Activated T-helper 1 cell treated with anti-CD3 and anti-CD28 coated beads, Interleukin-12 subunit alpha, Interleukin-12 subunit beta, Interleukin-2, Interleukin-4 antibody, amounts not matched to agents 30 ng/mL and 10 ng/mL and 1 ng/mL, durations not matched to agents 14 hours and 24 hours and 36 hours (primary cell): ENCODE measurements at regions of chr10 and their contacts with region 1.

Region 1: DNA sequence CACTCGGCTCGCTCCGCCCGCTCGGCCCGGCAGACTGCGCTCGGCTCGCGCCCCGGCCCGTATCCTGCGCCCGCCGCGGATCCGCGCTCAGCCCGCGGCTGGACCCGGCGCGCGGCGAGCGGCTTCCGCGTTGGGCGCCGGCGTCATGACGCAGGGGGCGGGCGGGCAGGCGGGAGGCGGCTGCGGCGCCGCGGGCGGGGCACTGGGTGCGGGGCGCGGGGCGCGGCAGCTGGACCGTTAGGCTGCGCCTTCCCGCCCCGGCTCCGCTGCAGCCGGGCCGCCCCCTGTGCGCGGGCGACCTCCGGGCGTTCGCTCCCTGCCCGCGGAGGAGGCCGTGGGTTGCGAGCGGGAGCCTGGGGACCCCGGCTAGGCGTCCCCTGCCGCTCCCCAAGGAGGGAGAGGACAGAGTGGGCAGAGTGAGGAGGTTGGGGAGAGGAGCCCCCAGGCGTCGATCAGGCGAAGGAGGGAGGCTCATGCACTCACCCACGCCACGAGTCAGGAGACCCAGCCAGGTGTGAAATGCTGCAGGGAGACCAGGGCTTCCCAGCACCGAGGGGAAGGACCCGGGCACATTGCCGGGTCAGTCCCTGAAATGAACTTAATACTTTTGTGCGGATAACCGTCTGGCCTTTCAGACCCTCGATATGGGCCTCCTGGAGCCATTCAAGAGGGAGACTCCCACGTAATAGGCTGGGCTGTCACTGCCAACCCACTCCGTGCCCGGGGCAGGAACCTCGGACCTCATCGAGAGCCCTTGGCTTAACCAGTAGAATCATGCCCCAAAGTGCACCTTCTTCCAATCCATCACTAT is at the start of gene PIP4K2A:
- DNase-seq: peak; percentile 72
- H3K4me3 Mint-ChIP-seq: peak within 1 kb of the TSS; percentile 88
- H3K27ac Mint-ChIP-seq: peak within 1 kb of the TSS; percentile 85
- H3K4me1 Mint-ChIP-seq: peaks cover 39% of the 10 kb centered on the region
- H3K27me3 Mint-ChIP-seq: no peaks in the 10 kb centered on the region
- total RNA-seq, gene PIP4K2A: 92.7 and 104 TPM in 2 replicates

Region 2: DNA sequence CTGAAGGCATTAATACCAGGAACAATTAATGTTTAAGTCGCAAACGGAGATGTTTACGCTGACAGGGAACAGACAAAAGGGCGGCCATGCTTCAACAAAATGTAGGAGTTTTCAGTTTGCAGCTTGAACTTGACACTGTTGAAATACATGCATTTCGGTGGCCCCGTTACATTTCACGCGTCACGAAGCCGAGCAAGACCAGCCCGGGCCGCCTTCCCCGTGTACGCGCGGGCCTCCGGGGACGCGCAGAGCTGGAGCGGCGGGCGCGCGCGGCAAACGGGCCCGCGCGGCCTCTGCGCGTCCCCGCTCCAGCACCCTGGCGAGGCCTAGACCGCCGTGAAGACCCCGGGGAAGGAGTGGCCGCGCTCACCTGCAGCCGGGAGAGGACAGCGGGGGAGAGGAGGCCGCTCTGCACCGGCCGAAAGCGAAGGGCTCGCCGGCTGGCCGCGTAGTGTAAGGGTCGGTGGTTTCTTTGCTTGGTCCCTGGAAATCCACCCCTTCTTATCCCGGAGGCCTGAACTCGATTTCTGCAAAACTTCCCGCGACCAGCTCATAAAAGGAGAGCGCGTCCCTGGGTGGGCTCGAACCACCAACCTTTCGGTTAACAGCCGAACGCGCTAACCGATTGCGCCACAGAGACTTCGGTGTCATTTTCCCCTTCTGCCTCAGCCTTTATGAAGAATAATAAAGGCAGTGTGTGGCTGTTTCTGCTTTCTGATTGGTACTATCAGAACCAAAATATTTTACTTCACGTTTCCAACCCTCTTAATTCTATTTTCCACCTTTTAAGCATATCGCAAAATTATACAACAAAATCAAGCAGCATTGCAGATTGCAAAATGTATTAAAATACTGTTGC is 485.5 kb before region 1 on chr10:
- intact Hi-C with region 1: loop called (anchors 10 kb)
- DNase-seq: peak; percentile 77
- H3K4me3 Mint-ChIP-seq: peak overlapping the region; percentile 92
- H3K27ac Mint-ChIP-seq: peak overlapping the region; percentile 98
- H3K4me1 Mint-ChIP-seq: peaks cover 32% of the 10 kb centered on the region
- H3K27me3 Mint-ChIP-seq: peaks cover 11% of the 10 kb centered on the region

Region 3: GRCh38 chr10:22550732-22551131 is 164.0 kb before region 1 on chr10:
- intact Hi-C with region 1: loop called (anchors 1 kb)
- DNase-seq: peak; percentile 13
- H3K4me3 Mint-ChIP-seq: no peak overlapping the region
- H3K27ac Mint-ChIP-seq: peak overlapping the region; percentile 40
- H3K4me1 Mint-ChIP-seq: peaks cover 23% of the 10 kb centered on the region
- H3K27me3 Mint-ChIP-seq: no peaks in the 10 kb centered on the region

Region 4: GRCh38 chr10:22611425-22612115 is 103.1 kb before region 1 on chr10:
- intact Hi-C with region 1: loop called (anchors 1 kb)
- DNase-seq: peak; percentile 72
- H3K4me3 Mint-ChIP-seq: peak overlapping the region; percentile 38
- H3K27ac Mint-ChIP-seq: peak overlapping the region; percentile 21
- H3K4me1 Mint-ChIP-seq: peaks cover 90% of the 10 kb centered on the region
- H3K27me3 Mint-ChIP-seq: no peaks in the 10 kb centered on the region

Region 5: DNA sequence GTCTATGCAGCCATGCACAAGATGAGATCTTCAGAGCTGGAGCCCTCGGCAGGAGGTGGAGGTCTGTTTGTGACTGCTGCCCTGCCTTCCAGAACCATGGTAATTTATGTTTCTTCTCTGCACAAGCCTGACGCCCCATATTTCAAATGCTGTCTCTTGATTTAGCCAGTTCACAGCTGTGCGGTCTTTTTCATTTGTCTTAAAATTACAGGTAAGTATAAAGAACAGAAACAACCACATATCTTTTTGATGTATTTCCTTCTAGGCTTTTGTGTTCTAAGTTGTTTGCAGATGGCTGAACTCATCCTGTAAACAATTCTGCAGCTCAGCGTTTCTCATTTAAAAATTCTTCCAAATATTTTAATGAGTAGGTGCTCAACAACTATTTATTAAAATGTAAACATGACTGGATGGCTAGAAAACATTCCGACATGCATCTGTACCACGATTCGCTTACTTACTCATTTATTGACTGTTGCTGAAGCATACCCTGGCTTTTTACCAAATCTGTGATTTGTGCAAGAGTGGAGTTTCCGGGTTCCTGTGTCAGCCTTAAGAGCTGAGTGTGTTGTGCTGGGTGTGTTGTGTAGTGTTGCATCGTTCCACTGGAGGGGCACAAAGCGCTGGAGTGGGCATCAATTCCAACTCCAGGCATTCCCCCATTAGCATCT is 59.2 kb before region 1 on chr10:
- intact Hi-C with region 1: loop called (anchors 1 kb)
- DNase-seq: no peak
- H3K4me3 Mint-ChIP-seq: peak overlapping the region; percentile 72
- H3K27ac Mint-ChIP-seq: peak overlapping the region; percentile 94
- H3K4me1 Mint-ChIP-seq: peaks cover 95% of the 10 kb centered on the region
- H3K27me3 Mint-ChIP-seq: no peaks in the 10 kb centered on the region

Region 6: DNA sequence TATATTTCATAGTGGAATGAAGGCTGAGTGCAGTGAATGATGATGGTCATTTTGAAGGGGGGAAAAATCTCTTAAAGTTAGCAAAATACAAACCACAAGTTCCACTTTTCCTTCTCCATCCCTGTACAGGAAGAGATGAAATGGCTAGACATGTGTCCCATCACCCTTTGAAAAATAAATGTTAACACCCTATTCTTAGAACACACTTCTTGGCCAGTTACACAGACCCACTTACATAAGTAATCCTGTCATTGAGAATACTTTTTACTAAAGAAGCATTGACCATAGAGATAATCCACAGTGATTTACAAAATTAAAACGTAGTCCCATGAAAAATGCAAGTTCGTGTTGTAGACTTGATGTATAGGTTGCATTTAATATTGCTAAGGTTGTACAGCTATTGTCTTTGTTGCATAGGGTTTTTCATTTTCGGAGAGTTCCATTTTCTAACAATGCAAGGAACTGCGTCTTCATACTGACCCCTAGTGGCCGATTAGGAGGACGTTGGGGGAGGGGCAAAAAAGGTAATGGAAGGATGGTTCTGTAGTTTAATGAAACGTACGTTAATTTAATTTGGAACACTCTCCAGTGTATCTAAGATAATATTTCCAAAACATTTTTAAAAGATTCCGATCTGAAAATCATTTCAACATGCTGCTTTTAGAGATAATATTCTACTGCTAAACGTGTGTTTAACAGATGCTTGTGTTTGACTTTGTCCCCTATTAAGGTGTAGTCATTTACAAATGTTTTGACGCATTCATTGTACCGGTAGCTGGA is 274.1 kb after region 1 on chr10:
- intact Hi-C with region 1: loop called (anchors 10 kb)
- DNase-seq: peak; percentile 57
- H3K4me3 Mint-ChIP-seq: no peak overlapping the region
- H3K27ac Mint-ChIP-seq: no peak overlapping the region
- H3K4me1 Mint-ChIP-seq: peaks cover 22% of the 10 kb centered on the region
- H3K27me3 Mint-ChIP-seq: peaks cover 9% of the 10 kb centered on the region